Activated CD4-positive, alpha-beta T cell treated with anti-CD3 and anti-CD28 coated beads for 36 hours (primary cell): ENCODE measurements at regions of chr1 and their contacts with region 1.

Region 1: DNA sequence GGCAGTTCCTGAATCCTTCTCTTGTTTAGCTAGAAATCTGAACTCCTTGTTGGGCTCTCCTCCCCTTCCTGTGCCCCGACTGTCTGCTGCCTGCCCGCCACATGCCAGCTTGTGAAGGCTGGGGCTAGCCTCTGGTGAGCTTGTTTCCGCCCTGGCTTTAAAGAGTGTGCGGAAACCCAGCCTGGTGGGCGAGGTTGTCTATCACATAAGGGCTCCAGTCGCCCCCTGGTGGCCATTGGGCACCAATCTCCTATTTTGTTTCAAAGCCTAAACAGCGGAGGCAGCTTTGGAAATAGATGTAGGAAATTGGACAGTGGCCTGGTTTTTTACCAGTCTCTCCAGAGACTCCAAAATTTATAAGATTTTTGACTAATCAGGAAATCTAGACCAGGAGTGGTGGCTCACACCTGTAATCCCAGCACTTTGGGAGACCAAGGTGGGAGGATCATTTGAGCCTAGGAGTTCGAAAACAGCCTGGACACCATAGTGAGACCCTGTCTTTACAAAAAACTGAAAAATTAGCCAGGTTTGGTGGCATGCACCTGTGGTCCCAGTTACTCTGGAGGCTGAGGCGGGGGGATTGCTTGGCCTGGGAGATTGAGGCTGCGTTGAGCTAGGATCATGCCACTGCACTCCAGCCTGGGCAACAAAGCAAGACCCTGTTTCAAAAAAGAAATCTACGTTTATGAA is 9.8 kb downstream of the ATP8B2 start:
- DNase-seq: peak; percentile 97
- ATAC-seq: peak; percentile 95
- H3K4me3 Mint-ChIP-seq: no peak overlapping the region
- H3K27ac Mint-ChIP-seq: peak overlapping the region; percentile 92
- H3K4me1 Mint-ChIP-seq: peaks cover 64% of the 10 kb centered on the region
- H3K27me3 Mint-ChIP-seq: no peaks in the 10 kb centered on the region

Region 2: GRCh38 chr1:154272217-154272998 is 62.8 kb before region 1 on chr1 and contains the start of gene HAX1:
- CTCF ChIA-PET with region 1: interaction called, 29 read pairs
- POLR2A ChIA-PET with region 1: interaction called, 3 read pairs
- intact Hi-C with region 1: loop called (anchors 1 to 2 kb)
- DNase-seq: peak; percentile 99
- ATAC-seq: peak; percentile 95
- H3K4me3 Mint-ChIP-seq: peak within 1 kb of the TSS; percentile 99
- H3K27ac Mint-ChIP-seq: peak within 1 kb of the TSS; percentile 99
- H3K4me1 Mint-ChIP-seq: peaks cover 37% of the 10 kb centered on the region
- H3K27me3 Mint-ChIP-seq: no peaks in the 10 kb centered on the region
- total RNA-seq, gene HAX1: 177 to 225 TPM

Region 3: GRCh38 chr1:154324669-154325582 is 10.2 kb before region 1 on chr1 and contains the start of gene ATP8B2:
- CTCF ChIA-PET with region 1: interaction called, 99 read pairs
- POLR2A ChIA-PET with region 1: interaction called, 6 read pairs
- intact Hi-C with region 1: loop called in 1 of 2 experiments (anchors 1 kb)
- DNase-seq: peak; percentile 92
- ATAC-seq: peak; percentile 70
- H3K4me3 Mint-ChIP-seq: peak within 1 kb of the TSS; percentile 99
- H3K27ac Mint-ChIP-seq: peak within 1 kb of the TSS; percentile 94
- H3K4me1 Mint-ChIP-seq: peaks cover 39% of the 10 kb centered on the region
- H3K27me3 Mint-ChIP-seq: no peaks in the 10 kb centered on the region
- total RNA-seq, gene ATP8B2: 48.2 TPM

Region 4: DNA sequence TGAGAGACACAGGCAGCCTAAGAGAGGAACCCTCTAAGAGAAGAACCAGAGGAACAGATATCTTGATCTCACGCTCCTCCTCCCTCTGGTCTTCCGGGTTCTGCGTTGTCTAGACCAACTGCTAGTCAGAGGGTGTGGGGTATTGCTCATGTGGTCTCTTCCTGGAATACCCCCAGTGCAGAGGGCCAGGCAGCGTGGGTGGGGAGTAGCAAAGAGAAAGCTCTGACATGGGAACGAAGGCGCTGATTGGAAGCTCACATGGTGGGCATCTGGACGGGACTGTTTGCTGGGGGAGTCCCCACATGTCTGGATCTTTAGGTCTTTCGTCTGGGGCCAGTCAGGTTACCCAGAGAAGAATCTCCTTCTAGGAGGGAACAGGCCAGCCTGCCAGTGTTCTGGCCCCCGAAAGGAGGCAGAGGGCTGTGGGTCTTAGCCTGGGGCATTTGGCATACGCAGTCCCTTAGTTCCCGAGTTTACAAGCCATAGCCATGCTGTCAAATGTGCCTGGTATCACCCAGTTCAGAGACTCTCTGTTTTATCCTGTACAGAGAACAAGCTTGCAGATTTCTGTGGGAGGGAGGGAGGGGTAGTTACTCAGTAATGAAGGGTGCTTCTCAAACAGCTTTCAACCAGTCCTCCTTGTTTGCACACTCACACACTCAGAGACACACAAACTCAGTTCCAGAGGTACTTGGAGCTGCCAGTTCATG is 51.6 kb after region 1 on chr1:
- CTCF ChIA-PET with region 1: interaction called, 15 read pairs
- POLR2A ChIA-PET with region 1: no interaction called
- intact Hi-C with region 1: no loop called
- DNase-seq: peak; percentile 87
- ATAC-seq: peak; percentile 93
- H3K4me3 Mint-ChIP-seq: peak overlapping the region; percentile 55
- H3K27ac Mint-ChIP-seq: peak overlapping the region; percentile 95
- H3K4me1 Mint-ChIP-seq: peaks cover 31% of the 10 kb centered on the region
- H3K27me3 Mint-ChIP-seq: no peaks in the 10 kb centered on the region

Region 5: DNA sequence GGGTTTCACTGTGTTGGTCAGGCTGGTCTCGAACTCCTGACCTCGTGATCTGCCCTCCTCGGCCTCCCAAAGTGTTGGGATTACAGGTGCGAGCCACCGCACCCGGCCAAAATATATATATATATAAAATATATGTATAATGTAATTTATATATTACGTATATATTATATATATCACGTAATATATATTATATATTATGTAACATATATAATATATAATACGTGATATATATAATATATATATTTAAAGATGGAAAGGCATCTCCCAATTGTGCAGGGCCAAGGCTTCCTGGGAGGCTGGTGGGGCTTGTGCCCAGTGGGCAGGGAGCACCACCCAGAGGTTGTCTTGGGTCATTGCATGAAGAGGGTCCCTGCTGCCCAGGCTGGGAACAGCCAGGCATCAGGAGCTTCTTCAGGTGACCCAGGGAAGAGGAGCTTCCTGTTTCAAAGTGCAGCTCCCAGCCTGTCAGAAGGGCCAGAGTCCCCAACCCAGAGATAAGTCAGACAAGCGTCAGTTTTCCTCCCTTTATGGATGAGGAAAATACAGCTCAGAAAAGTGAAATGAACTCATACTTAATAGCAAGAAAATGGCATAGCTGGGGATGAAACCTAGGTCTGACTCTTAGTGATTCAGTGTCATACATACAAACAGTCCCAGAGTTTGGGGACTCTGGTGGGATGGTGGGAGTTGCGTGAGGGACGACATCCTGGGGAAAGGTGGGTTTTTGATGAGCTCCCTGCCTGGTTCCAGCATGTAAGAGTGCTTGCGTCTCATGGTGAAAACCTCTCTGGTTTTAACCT is 211.3 kb after region 1 on chr1:
- CTCF ChIA-PET with region 1: interaction called, 17 read pairs
- POLR2A ChIA-PET with region 1: no interaction called
- intact Hi-C with region 1: no loop called
- DNase-seq: peak; percentile 79
- ATAC-seq: peak; percentile 94
- H3K4me3 Mint-ChIP-seq: no peak overlapping the region
- H3K27ac Mint-ChIP-seq: no peak overlapping the region
- H3K4me1 Mint-ChIP-seq: peaks cover 9% of the 10 kb centered on the region
- H3K27me3 Mint-ChIP-seq: peaks cover 2% of the 10 kb centered on the region

Region 6: DNA sequence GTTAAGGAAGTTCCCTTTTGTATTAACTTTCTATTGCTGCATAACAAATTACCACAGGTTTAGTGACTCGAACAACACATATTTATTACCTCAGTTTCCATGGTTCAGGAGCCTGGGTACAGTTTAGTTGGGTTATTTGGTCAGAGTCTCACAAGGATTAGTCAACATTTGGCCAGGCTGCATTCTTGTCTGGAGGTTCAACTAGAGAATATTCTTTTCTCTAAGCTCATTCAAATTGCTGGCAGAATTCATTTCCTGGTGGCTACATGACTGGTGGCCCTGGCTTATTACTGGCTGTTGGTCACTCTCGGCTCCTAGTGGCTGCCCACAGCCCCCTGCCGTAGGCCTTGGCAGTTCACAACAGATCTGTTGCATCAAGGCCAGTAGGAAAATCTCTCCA is 353.9 kb after region 1 on chr1:
- CTCF ChIA-PET with region 1: no interaction called
- POLR2A ChIA-PET with region 1: no interaction called
- intact Hi-C with region 1: no loop called
- DNase-seq: no peak
- ATAC-seq: no peak
- H3K4me3 Mint-ChIP-seq: no peak overlapping the region
- H3K27ac Mint-ChIP-seq: no peak overlapping the region
- H3K4me1 Mint-ChIP-seq: no peaks in the 10 kb centered on the region
- H3K27me3 Mint-ChIP-seq: no peaks in the 10 kb centered on the region